Right ventricle myocardium inferior (tissue), 1 donor: ENCODE measurements at regions of chr21 and their contacts with region 1.

Region 1: GRCh38 chr21:41283211-41283818 is 33.3 kb upstream of the FAM3B start:
- DNase-seq: no peak
- ATAC-seq: peak; percentile 85

Region 2: DNA sequence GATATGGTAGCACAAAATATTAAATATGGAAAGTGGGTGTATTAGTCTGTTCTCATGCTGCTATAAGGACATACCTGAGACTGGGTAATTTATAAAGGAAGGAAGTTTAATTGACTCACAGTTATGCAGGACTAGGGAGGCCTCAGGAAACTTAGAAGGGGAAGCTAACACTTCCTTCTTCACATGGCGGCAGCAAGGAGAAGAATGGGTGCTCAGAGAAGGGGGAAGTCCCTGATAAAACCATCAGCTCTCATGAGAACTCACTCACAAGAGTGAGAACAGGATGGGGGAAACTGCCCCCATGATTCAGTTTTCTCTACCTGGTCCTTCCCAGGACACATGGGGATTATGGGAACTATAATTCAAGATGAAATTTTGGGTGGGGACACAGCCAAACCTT is 131.2 kb before region 1 on chr21:
- intact Hi-C with region 1: no loop called
- DNase-seq: no peak
- ATAC-seq: no peak

Region 3: DNA sequence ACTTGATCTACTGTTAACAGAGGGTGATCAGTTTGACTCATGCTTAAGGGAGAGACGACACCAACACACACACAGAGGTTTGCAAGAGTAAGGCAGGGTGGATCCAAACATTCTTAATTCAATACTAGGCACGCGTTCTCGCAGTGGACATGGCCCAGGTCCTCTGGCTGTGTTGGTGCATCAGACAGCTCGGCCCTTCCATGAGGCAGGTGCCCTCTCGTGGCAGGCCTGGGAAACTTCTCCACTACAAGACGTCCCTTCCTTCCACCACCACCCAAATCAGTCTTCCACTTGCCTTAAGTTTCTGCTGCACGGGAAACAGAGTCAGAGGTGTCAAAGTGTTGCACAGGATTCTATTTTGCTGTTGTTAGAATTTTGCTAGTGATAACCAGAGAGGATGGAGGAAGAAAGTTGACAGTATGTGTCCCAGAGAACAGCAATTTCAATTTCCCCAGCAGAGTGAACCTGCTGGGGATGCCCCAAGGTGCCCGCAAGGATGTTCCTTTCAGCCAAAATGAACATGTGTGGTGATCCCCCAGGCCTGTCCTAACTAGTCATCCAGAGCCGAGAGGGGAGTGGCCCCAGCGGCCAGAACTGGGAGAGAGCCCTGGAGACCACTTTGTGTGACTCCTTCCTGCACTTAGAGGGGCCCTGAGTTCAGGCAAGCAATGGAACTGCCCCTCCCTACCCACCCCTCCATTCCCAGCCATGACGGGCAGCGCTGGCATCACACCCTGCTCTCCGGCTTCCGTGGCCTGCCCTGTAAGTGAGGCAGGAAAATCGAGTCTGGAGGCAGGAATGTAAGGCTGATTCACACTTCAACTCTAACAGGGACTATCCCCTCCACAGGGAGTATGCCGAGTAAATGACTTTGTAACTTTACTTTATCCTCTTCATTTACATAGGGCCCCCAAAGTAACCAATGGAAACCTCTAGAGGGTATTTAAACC is 177.5 kb after region 1 on chr21:
- intact Hi-C with region 1: loop called (anchors 1 kb)
- DNase-seq: peak; percentile 89
- ATAC-seq: peak; percentile 89

Region 4: DNA sequence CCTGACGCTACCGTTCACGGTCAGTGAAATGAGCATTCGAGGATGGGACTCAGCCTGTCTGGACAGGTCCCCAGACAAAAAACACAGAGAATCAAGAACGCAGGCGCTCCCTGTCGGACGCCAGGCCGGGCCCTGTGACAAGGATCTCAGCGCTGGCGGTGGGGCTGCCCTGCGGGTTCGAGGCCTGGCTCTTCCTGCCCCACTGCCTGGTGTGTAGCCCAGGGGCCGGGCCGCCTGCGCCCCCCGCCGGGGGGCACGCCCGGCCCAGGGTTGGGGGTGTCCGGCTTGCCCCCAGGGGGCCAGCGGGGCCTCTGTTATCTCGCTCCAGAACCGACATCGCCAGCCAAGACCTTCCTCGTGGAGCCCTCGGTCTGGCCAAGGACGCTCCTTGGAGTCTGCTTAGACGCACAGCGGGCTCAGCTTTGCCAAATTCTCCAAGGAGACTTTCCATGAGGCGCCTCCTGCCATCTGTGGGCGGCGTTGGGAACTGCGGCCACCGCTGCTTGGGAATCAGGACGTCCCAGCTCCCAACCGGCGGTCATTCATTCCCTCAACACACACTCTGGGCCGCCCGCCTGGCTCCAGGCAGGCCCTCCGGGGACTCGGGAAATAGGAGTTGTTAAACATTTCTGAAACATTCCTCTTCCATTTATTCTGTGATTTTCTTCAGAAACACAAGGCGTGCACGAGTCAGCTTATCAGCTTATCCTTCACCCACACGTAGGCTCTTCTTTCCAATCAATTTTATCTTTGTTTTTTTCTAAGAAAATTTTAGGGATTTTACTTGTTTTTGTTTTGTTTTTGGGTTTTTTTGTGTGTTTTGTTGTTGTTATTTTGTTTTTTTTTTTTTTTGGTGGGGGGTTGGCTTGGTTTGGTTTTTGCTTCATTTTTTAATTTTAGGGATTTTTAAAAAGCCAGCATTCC is 494.9 kb after region 1 on chr21:
- intact Hi-C with region 1: loop called (anchors 5 kb)
- DNase-seq: peak; percentile 88
- ATAC-seq: peak; percentile 94